ENCODE measurements at regions of chr5 and their contacts with region 1.

Region 1: GRCh38 chr5:129053438-129053837 is 41.1 kb upstream of the ISOC1 start:
- DNase-seq: no peak

Region 2: DNA sequence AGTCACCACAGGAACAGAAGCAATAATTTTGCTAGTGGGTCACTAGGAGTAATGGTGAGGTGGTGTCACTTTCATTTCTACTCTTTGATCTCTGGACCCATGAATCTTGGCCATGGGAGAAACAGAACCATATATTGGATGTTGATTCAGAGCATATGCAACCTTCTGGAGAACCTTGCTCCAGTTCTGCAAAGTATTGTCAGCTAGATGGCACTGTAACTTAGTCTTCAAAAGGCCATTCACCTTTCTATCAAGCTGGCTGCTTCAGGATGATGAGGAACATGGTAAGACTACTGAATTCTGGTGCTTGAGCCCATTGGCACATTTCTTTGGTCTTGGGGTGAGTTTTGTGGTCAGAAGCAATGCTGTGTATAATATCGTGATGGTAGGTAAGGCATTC is 386.3 kb before region 1 on chr5:
- intact Hi-C with region 1: loop called (anchors 10 kb)
- DNase-seq: no peak

Region 3: GRCh38 chr5:128920345-128921215 is 132.9 kb before region 1 on chr5:
- intact Hi-C with region 1: loop called (anchors 10 kb)
- DNase-seq: no peak

Region 4: GRCh38 chr5:129322968-129323367 is 269.5 kb after region 1 on chr5:
- intact Hi-C with region 1: no loop called
- DNase-seq: no peak

Measured in cardiac septum (tissue), 1 donor.